Breast epithelium (tissue), 4 donors: ENCODE measurements at regions of chr3 and their contacts with region 1.

Region 1: GRCh38 chr3:51751287-51751686 is 27.8 kb downstream of the IQCF6 start:
- DNase-seq: no peak
- H3K4me3 ChIP-seq: no peak overlapping the region
- H3K27ac ChIP-seq: no peak overlapping the region
- H3K4me1 ChIP-seq: no peaks in the 10 kb centered on the region
- H3K27me3 ChIP-seq: no peaks in the 10 kb centered on the region
- CTCF ChIP-seq: no peak
- POLR2A ChIP-seq: no peak

Region 2: GRCh38 chr3:51786267-51786666 is 35.0 kb after region 1 on chr3:
- intact Hi-C with region 1: no loop called
- DNase-seq: no peak
- H3K4me3 ChIP-seq: no peak overlapping the region
- H3K27ac ChIP-seq: no peak overlapping the region
- H3K4me1 ChIP-seq: no peaks in the 10 kb centered on the region
- H3K27me3 ChIP-seq: no peaks in the 10 kb centered on the region
- CTCF ChIP-seq: no peak
- POLR2A ChIP-seq: no peak

Region 3: DNA sequence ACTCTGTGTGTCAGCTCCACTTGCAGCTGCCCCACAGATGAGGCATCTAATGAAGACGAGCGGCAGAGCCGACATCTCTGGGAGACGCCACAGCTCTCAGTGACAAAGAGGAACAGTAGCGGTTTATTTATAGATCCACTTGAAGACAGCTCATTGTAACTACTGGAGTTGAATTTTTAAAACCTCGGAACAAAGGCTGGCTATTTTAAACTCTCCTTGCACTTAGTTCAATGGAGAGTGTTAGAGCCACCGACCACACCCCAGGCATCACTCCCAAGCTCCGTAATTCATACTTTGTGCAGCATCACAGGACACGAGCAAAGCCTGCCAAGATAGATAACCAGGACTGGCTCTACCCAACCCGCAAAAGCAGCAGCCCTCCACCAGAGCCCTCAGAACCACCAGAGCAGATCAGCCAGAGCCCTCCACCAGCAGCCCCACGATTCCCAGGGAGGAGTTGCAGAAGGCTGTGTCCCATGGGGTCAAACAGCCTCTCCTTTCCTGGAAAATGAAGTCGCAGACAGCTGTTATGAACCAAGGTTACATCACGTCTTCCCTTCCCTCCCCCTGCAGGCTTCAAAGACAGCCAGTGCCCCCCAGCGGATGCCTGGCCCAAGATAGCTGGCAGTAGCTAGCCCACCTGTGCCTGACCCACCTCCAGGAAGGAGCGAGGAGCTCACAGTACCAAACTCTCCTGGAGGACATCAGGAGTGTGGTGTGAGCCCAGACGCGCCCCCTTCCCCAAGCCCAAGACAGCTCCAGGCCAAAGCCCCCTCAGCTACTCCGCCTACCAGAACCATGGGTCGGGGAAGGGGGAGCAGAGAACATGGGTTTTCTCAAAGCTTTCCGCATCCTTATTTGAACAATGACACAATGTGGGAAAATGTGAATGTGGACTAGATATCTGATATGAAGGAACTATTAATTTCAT is 357.3 kb after region 1 on chr3:
- intact Hi-C with region 1: loop called (anchors 10 kb)
- DNase-seq: no peak
- H3K4me3 ChIP-seq: no peak overlapping the region
- H3K27ac ChIP-seq: no peak overlapping the region
- H3K4me1 ChIP-seq: no peaks in the 10 kb centered on the region
- H3K27me3 ChIP-seq: no peaks in the 10 kb centered on the region
- CTCF ChIP-seq: no peak
- POLR2A ChIP-seq: no peak